PC-9 (cell line): ENCODE measurements at regions of chr5 and their contacts with region 1.

Region 1: DNA sequence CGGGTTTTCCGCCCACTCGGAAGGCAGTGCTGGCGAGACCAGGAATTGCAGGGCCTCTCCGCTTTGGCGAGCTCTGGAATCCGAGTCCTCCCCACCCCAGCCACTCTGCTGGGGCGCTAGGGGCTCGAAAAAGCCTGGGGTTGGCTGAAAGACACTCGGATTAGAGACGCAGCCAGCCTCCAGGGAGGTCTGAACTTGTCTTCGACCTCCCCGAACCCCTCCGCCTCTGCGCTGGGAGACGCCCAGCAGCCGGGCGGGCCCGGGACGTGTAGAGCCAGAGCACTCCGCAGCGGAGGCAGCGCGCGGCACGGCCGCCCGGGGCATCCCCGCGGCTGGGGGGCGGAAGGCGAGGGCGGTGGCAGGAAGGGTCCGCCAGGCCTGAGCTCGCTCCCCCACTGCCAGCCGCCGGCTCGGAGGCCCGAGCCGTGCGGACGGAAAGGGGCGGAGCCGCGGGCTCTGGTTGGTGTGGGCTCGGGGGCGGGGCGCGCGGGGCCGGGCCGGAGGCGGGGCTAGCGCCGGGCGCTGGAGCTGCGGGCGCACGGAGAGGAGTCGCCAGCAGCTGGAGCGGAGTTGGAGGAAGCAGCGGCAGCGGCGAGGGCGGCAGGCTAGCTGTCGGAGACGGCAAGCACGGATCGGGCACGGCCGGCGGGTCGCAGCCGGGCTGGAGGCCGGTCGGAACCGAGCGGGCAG is at the start of gene PIK3R1:
- DNase-seq: peak; percentile 69 to 93
- H3K4me3 ChIP-seq: peak within 1 kb of the TSS; percentile 73
- H3K27ac ChIP-seq: peak within 1 kb of the TSS; percentile 69
- H3K4me1 ChIP-seq: peaks cover 22% of the 10 kb centered on the region
- H3K27me3 ChIP-seq: no peaks in the 10 kb centered on the region
- CTCF ChIP-seq: 0 out of 2 replicates have a peak, but pooled peaks have one; percentile 27
- total RNA-seq, gene PIK3R1: 15.1 and 15.9 TPM in 2 replicates

Region 2: GRCh38 chr5:67493676-67494075 is 721.7 kb before region 1 on chr5:
- CTCF ChIA-PET with region 1: no interaction called
- POLR2A ChIA-PET with region 1: interaction called, 27 read pairs
- intact Hi-C with region 1: no loop called
- DNase-seq: peak in 1 of 2 experiments; percentile 7
- H3K4me3 ChIP-seq: no peak overlapping the region
- H3K27ac ChIP-seq: no peak overlapping the region
- H3K4me1 ChIP-seq: no peaks in the 10 kb centered on the region
- H3K27me3 ChIP-seq: no peaks in the 10 kb centered on the region
- CTCF ChIP-seq: no peak

Region 3: GRCh38 chr5:67963789-67964519 is 251.4 kb before region 1 on chr5:
- CTCF ChIA-PET with region 1: no interaction called
- POLR2A ChIA-PET with region 1: interaction called, 19 read pairs
- intact Hi-C with region 1: no loop called
- DNase-seq: peak in 1 of 2 experiments; percentile 23
- H3K4me3 ChIP-seq: no peak overlapping the region
- H3K27ac ChIP-seq: no peak overlapping the region
- H3K4me1 ChIP-seq: peaks cover 9% of the 10 kb centered on the region; the same call in 1 of the 2 replicates
- H3K27me3 ChIP-seq: no peaks in the 10 kb centered on the region
- CTCF ChIP-seq: no peak

Region 4: DNA sequence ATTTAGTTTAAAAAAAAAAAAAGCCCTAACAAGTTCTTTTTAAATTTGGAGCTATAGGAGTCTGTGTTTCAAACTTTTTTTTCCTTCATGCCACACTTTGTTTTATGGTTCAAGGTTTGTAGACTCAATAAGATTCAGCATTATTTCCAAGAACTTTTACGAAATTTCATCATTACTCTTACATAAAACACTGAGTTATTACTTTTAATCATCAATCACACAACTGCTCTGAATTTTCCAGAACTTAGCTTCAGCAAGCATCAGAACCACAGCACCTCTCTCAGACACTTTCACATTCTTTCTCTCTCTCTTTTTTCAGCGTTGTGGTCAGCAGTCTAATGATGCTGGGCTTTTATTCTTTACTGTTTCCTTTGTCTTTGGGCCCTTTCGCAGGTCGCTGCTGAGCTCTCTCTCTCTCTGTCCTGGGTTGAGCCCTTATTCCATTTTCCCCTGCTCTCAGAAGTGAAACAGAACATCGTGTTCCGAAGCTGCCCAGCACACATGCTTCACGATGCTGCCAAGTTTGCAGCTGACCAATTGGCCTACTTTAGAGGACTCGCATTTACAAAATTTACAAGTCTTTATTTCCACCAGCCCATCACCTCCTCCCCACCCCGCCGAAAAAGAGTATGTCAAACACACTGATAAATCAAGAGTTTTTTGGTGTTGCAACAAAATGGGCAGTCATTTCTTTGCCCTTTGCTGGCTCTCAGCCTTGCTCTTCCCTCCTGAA is 44.4 kb before region 1 on chr5:
- CTCF ChIA-PET with region 1: no interaction called
- POLR2A ChIA-PET with region 1: interaction called, 11 read pairs
- intact Hi-C with region 1: no loop called
- DNase-seq: no peak
- H3K4me3 ChIP-seq: no peak overlapping the region
- H3K27ac ChIP-seq: no peak overlapping the region
- H3K4me1 ChIP-seq: no peaks in the 10 kb centered on the region
- H3K27me3 ChIP-seq: no peaks in the 10 kb centered on the region
- CTCF ChIP-seq: no peak

Region 5: DNA sequence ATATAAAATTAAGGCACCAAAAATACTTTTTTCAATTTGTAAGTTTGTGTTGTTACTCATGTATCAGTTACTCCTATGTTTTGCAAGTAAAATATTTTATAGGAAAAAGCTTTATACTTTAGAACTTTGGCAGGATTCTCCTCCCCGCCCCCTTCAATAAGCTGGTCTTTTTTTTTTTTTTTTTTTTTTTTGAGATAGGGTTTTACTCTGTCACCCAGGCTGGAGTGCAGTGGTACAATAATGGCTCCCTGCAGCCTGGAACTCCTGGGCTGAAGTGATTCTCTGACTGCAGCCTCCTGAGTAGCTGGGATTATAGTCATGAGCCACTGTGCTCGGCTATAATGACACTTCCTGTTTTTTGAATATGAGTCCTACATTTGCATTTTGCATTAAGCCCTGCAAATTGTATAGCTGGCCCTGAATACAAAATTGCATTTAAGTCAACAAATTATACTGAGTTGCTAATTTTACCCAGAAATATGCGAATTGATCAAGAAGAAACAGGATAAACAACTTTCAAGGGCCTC is 193.1 kb after region 1 on chr5:
- CTCF ChIA-PET with region 1: no interaction called
- POLR2A ChIA-PET with region 1: interaction called, 12 read pairs
- intact Hi-C with region 1: no loop called
- DNase-seq: no peak
- H3K4me3 ChIP-seq: no peak overlapping the region
- H3K27ac ChIP-seq: no peak overlapping the region
- H3K4me1 ChIP-seq: peaks cover 24% of the 10 kb centered on the region
- H3K27me3 ChIP-seq: no peaks in the 10 kb centered on the region
- CTCF ChIP-seq: no peak